IMR-90 (cell line): ENCODE measurements at regions of chr5 and their contacts with region 1.

Region 1: GRCh38 chr5:133993231-133993949 is 11.4 kb downstream of the VDAC1 start:
- DNase-seq: peak; percentile 82
- ATAC-seq: peak; percentile 81
- H3K4me3 ChIP-seq: no peak overlapping the region
- H3K27ac ChIP-seq: no peak overlapping the region
- H3K4me1 ChIP-seq: peaks cover 34% of the 10 kb centered on the region
- H3K27me3 ChIP-seq: no peaks in the 10 kb centered on the region
- CTCF ChIP-seq: no peak
- POLR2A ChIP-seq: no peak
- RAD21 ChIP-seq: no peak

Region 2: DNA sequence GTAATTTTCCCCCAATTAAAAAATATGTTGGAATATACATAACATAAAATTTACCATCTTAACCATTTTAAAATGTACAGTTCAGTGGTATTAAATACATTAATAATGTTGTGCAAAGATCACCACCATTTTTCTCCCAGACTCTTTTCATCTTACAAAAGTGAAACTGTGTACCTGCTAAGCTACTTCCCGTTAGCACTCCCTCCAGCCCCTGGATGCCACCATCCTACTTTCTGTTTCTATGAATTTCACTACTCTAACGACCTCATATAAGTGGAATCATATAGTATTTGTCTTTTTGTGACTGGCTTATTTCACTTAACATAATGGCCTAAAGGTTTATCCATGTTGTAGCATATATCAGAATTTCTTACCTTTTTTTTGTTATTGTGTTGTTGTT is 828.6 kb before region 1 on chr5:
- CTCF ChIA-PET with region 1: no interaction called
- POLR2A ChIA-PET with region 1: no interaction called
- dilution Hi-C with region 1: no loop called
- in situ Hi-C with region 1: no loop called
- intact Hi-C with region 1: loop called (anchors 5 kb)
- DNase-seq: no peak
- ATAC-seq: no peak
- H3K4me3 ChIP-seq: no peak overlapping the region
- H3K27ac ChIP-seq: no peak overlapping the region
- H3K4me1 ChIP-seq: no peaks in the 10 kb centered on the region
- H3K27me3 ChIP-seq: peaks cover 2% of the 10 kb centered on the region; the same call in 1 of the 2 replicates
- CTCF ChIP-seq: no peak
- POLR2A ChIP-seq: no peak
- RAD21 ChIP-seq: no peak

Region 3: DNA sequence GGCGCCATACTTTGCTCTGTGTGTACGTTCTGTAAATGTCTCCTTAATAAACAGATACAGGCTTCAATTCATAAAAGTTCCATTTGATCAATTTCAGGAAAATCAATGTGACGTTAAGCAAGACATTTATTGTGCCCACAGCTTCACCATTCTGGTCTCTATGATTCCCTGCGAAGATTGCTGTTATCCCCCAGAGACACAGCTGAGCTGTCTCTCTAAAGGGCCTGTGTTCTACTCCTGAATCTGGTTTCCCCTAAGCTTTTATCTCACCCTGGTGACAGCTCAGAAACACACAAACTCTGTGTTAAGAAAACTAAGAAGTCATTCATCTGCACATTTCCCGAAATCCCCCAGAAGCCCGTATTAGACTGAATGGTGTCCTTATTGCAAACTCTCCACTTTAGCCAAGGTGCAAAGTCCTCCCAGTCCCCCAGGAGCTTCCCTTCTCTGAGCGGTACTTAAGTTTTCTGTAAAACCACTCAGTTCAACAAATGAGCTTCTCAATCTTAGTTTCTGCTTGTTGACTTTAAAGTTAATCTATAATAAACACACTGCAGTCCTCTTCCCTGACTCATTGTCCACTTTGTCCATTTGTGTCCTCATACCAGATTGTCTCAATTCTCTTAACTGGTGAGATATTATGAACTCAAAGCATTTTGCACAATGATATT is 23.6 kb before region 1 on chr5:
- CTCF ChIA-PET with region 1: no interaction called
- POLR2A ChIA-PET with region 1: no interaction called
- dilution Hi-C with region 1: no loop called
- in situ Hi-C with region 1: no loop called
- intact Hi-C with region 1: loop called (anchors 2 kb)
- DNase-seq: peak; percentile 79
- ATAC-seq: peak; percentile 25
- H3K4me3 ChIP-seq: no peak overlapping the region
- H3K27ac ChIP-seq: peak overlapping the region; percentile 41; the same call in 1 of the 2 replicates
- H3K4me1 ChIP-seq: peaks cover 11% of the 10 kb centered on the region
- H3K27me3 ChIP-seq: no peaks in the 10 kb centered on the region
- CTCF ChIP-seq: no peak
- POLR2A ChIP-seq: no peak
- RAD21 ChIP-seq: no peak

Region 4: DNA sequence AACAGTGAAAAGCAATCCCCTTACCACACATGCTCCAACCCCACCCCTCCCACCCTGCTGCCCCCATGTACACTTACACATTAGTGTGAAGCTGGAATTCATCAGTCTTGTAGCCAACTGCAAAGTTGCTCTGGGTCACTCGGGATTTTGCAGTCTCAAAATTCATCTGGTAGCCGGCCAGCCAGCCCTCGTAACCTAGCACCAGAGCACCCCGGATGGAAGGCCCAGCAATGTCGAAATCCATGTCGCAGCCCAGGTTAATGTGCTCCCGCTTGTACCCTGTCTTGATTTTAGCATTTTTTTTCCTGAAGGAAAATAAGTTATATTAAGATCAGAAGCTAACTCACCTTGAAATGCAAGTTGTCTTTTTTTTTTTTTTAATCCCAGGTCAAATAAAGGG is 12.7 kb before region 1 on chr5:
- CTCF ChIA-PET with region 1: interaction called, 12 read pairs
- POLR2A ChIA-PET with region 1: no interaction called
- dilution Hi-C with region 1: no loop called
- in situ Hi-C with region 1: no loop called
- intact Hi-C with region 1: no loop called
- DNase-seq: no peak
- ATAC-seq: no peak
- H3K4me3 ChIP-seq: no peak overlapping the region
- H3K27ac ChIP-seq: no peak overlapping the region
- H3K4me1 ChIP-seq: peaks cover 10% of the 10 kb centered on the region
- H3K27me3 ChIP-seq: no peaks in the 10 kb centered on the region
- CTCF ChIP-seq: no peak
- POLR2A ChIP-seq: no peak
- RAD21 ChIP-seq: no peak